Activated CD4-positive, alpha-beta T cell treated with anti-CD3 and anti-CD28 coated beads, Interleukin-2, amount 10 ng/mL, durations not matched to agents 24 days and 14 days (primary cell): ENCODE measurements at regions of chr12 and their contacts with region 1.

Region 1: GRCh38 chr12:11836282-11837151 is 187.0 kb downstream of the ETV6 start:
- DNase-seq: peak; percentile 84
- H3K4me3 Mint-ChIP-seq: peak overlapping the region; percentile 55
- H3K27ac Mint-ChIP-seq: peak overlapping the region; percentile 97
- H3K4me1 Mint-ChIP-seq: peaks cover 76% of the 10 kb centered on the region
- H3K27me3 Mint-ChIP-seq: no peaks in the 10 kb centered on the region

Region 2: DNA sequence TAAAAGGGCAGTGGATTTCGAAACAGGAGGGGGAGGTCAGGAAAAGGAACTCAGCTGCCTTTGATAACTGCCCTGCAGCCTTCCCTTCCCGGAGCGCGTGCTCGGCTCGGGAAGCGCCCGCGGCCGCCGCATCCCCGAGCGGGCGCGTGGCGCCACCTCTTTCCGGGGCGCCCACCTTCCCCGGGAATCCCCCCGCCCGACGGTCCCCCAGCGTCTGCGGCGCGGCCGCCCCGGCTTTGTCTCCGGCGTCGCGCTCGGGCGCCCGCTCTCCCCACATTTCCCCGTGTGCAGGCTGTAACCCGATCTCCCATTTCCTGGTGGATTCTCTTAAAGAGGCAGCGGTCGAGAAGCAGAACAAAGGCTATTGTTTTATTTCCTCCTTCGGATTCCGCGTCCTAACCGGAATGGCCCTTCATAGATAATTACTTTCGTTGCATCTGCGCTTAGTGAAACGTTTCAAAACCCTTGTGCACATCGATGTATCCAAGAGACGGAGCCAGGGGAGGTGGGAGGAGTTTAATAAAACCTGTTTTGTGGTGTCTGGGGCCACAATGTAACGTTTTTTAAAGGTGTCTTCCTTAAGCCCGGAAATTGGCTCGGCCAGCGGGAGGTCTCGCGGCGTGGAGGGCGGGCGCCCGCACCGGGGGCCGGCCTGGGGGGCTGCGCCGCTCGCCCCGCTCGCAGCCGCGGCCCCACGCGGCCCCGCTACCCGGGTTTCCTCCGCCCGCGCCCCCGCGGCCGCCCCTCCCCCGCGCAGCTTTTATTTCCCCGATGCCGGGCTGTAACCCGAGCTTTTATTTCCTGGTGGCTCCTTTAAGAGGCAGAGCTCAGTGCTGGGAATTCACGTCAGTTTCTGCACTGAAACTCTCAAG is 187.4 kb before region 1 on chr12 and contains the start of gene ETV6:
- intact Hi-C with region 1: loop called (anchors 1 kb)
- DNase-seq: peak; percentile 94
- H3K4me3 Mint-ChIP-seq: peak within 1 kb of the TSS; percentile 91
- H3K27ac Mint-ChIP-seq: peak within 1 kb of the TSS; percentile 97
- H3K4me1 Mint-ChIP-seq: peaks cover 25% of the 10 kb centered on the region
- H3K27me3 Mint-ChIP-seq: no peaks in the 10 kb centered on the region
- total RNA-seq, gene ETV6: 114 and 119 TPM in 2 replicates

Region 3: GRCh38 chr12:11765817-11766794 is 70.4 kb before region 1 on chr12:
- intact Hi-C with region 1: loop called (anchors 1 kb)
- DNase-seq: peak; percentile 74
- H3K4me3 Mint-ChIP-seq: peak overlapping the region; percentile 69
- H3K27ac Mint-ChIP-seq: peak overlapping the region; percentile 95
- H3K4me1 Mint-ChIP-seq: peaks cover 90% of the 10 kb centered on the region
- H3K27me3 Mint-ChIP-seq: no peaks in the 10 kb centered on the region

Region 4: GRCh38 chr12:11805043-11805442 is 31.5 kb before region 1 on chr12:
- intact Hi-C with region 1: no loop called
- DNase-seq: no peak
- H3K4me3 Mint-ChIP-seq: no peak overlapping the region
- H3K27ac Mint-ChIP-seq: peak overlapping the region; percentile 30
- H3K4me1 Mint-ChIP-seq: peaks cover 54% of the 10 kb centered on the region
- H3K27me3 Mint-ChIP-seq: no peaks in the 10 kb centered on the region

Region 5: DNA sequence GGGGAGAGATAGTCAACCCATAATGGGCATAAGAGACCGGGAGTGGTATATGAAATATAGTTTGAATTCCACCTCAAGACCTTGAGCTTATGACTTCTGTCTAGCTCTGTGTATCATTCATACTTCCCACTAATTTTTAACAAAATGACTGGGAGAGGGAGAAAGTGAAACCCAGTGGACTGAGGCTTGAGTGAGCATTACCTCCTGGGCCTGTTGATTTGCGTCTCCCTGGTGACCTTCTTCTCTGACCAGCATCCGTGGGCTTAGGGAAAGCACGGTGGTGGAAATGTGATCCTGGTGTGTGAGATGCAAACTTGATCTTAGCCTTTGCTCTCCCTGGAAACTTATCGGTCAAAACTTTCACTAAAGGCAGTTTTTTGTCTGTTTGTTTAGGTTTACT is 26.3 kb after region 1 on chr12:
- intact Hi-C with region 1: loop called (anchors 1 kb)
- DNase-seq: no peak
- H3K4me3 Mint-ChIP-seq: no peak overlapping the region
- H3K27ac Mint-ChIP-seq: peak overlapping the region; percentile 60
- H3K4me1 Mint-ChIP-seq: peaks cover 57% of the 10 kb centered on the region
- H3K27me3 Mint-ChIP-seq: no peaks in the 10 kb centered on the region

Region 6: GRCh38 chr12:11958221-11959091 is 121.9 kb after region 1 on chr12:
- intact Hi-C with region 1: loop called (anchors 2 kb)
- DNase-seq: peak; percentile 85
- H3K4me3 Mint-ChIP-seq: peak overlapping the region; percentile 27
- H3K27ac Mint-ChIP-seq: peak overlapping the region; percentile 91
- H3K4me1 Mint-ChIP-seq: peaks cover 57% of the 10 kb centered on the region
- H3K27me3 Mint-ChIP-seq: no peaks in the 10 kb centered on the region